ENCODE measurements at regions of chr5 and their contacts with region 1.

Region 1: DNA sequence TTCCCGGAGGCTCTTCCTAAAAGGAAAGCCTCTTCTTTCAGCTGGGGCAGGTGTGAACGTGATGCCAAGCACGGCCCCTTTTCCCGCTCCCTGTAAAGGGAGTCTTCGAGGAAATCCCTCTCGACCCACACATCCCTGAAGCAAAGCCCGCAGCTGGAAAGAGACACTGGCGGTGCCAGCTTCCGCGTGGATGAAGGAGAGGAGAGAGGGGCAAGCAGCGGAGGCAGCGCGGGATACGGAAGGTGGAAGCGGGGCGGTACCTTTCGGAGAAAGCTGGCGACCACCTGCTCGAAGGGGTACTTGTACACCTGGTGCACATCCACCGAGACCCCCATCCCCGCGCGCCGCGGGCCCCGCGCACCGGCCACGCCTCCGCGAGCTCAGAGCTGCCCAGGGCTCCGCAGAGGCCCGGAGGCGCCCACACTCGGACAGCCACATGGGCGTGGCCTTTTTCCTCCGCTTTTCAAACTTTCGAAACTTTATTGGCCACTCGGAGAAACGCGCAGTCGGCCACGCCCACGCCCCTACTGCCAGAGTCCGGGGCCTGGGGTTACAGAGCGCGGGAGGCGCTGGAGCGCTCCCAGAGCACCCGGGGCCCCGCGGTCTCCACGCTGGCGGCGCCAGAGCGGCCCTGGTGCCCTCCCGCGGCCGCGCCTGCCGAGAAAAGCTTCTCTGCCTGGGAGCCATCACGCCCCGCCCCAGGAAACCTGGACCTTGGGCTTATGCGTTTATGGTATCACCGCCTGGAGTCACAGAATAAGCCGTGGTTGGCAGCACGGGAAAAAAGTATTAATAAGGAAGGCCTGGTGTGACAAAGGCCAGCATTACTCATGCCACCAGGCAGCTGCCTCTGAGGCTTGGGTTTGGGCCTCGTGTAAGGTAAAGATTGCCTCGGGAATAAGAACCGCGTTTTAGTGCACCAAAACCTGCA is at the start of gene PRELID2:
- DNase-seq: peak; percentile 61
- H3K4me3 ChIP-seq: peak within 1 kb of the TSS; percentile 77
- H3K27ac ChIP-seq: no peak within 1 kb of the TSS
- H3K27me3 ChIP-seq: no peaks in the 10 kb centered on the region
- CTCF ChIP-seq: no peak
- polyA plus RNA-seq, gene PRELID2: 3.9 and 5.4 TPM in 2 replicates

Region 2: DNA sequence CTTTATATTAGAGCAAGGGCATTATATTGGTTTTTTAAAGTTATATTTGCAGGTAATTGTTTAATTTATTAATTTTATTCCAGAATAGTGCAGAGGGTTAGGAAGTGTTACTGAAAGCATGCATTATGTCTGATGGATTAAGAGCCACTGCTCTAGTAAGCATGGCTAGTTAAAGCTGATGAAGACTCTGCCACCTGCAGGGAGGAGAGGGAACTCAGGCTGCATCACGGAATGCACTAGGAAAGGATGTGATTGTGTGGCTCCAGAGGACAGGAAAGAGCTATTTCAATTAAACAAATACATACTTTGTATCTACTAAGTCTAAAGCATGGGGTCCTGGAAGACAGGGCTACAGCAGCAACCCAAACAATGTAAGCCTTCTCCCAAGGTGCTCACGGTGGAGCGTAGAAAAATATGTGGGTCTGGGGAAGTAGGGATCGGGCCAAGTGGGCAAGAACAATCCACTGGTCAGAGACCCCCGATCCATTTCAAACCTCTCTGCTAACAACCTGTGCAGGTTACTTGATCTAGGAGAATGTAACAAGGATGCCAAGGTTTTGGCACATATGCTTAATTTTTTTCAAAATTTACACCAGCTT is 52.9 kb after region 1 on chr5:
- CTCF ChIA-PET with region 1: interaction called, 10 read pairs
- POLR2A ChIA-PET with region 1: no interaction called
- DNase-seq: no peak
- H3K4me3 ChIP-seq: no peak overlapping the region
- H3K27ac ChIP-seq: no peak overlapping the region
- H3K27me3 ChIP-seq: no peaks in the 10 kb centered on the region
- CTCF ChIP-seq: peak; percentile 93